ENCODE measurements at regions of chr18 and their contacts with region 1.

Region 1: GRCh38 chr18:3454365-3455089 is 4.6 kb downstream of the TGIF1 start:
- DNase-seq: peak in 4 of 5 donors; percentile 29 to 61 (median 52)
- H3K4me3 ChIP-seq: peak overlapping the region; percentile 81
- H3K4me3 Mint-ChIP-seq: peak overlapping the region; percentile 85 to 99 (median 97)
- H3K27ac ChIP-seq: peak overlapping the region; percentile 94
- H3K27ac Mint-ChIP-seq: peak overlapping the region; percentile 66 to 100 (median 96)
- H3K4me1 ChIP-seq: peaks cover 29% of the 10 kb centered on the region
- H3K4me1 Mint-ChIP-seq: peaks cover 63 to 76% (median 72%) of the 10 kb centered on the region in 3 donors
- H3K27me3 ChIP-seq: no peaks in the 10 kb centered on the region
- H3K27me3 Mint-ChIP-seq: peaks cover 0 to 7% of the 10 kb centered on the region in 2 donors

Region 2: DNA sequence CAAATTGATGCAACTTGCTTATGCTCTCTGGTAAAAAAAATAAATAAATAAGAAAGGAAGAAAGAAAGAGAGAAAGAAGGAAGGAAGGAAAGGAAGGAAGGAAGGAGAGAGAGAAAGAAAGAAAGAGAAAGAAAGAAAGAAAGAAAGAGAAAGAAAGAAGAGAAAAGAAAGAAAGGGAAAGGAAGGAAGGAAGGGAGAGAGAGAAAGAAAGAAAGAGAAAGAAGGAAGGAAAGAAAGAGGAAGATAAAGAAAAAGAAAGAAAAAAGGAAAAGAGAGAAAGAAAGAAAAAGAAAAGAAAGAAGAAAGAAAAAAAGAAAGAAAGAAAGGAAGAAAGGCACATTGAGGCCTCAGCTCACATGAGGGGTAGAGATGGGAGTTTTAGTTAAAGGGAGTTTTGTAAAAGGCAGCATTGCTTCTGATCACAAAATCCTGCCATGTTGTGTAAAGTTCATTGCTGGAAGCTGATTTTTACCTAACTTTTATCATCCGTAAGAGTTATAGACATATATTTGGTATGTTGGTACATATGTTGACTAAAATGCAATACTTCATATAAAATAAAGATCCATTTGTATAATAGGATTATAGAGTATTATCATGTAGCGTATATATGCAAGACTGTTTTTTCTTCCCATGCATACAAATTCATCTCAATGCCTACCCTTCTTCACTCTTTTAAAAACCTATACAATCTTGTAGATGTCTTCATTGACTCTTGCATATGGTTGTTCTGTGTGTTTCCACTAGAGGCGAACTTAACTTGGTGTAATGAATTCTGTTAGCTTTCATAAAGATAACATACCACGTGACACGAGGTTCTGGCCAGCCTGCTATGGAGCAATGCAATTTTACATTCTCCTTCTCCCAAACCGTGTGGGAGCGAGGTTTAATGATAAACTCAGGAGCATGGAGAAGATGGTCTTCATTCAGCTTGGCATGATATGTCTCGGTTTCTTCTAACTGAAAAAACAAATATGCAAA is 267.6 kb before region 1 on chr18:
- CTCF ChIA-PET with region 1: no interaction called
- POLR2A ChIA-PET with region 1: no interaction called
- DNase-seq: no peak
- H3K4me3 ChIP-seq: no peak overlapping the region
- H3K4me3 Mint-ChIP-seq: no peak overlapping the region
- H3K27ac ChIP-seq: no peak overlapping the region
- H3K27ac Mint-ChIP-seq: no peak overlapping the region
- H3K4me1 ChIP-seq: no peaks in the 10 kb centered on the region
- H3K4me1 Mint-ChIP-seq: no peaks in the 10 kb centered on the region
- H3K27me3 ChIP-seq: no peaks in the 10 kb centered on the region
- H3K27me3 Mint-ChIP-seq: no peaks in the 10 kb centered on the region

Region 3: DNA sequence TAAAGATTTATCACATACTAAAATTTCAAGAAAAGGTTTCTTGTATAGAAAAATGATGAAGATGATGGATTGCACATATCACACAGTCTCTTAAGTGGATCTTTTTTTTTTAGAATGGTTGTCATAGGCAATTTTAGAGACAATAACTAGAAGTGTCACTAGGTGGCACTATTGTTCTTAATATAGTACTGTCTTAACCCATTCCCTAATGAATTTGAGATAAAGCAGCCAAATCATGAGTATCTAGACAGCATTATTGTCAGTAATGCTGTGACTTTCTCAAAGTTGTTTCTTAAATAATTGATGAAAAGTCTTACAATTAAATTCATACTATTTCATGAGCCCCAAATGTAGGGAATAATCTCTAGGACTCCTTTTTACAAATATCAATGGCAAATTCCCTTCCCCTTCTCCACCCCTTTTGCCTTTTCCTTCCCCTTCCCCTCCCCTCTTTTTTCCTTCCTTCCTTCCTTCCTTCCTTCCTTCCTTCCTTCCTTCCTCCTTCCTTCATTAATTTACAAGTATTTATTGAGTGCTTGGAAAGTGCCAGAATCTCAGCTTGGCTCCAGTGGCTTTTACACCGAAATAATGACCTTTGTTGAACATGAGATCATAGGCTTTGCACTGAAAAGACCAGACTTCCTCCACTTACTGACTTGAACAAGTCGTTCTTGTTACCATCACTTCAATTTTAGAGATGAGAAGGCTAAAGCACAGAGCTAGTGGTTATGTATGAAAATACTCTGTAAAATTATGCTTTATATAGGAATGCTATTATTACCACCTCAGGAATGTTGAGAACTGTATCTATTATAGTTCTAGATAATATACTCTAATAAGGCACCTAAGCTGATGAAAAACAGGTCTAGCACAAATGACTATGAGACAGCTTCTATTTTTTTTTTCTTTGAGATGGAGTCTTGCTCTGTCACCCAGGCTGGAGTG is 172.8 kb before region 1 on chr18:
- CTCF ChIA-PET with region 1: interaction called, 10 read pairs
- POLR2A ChIA-PET with region 1: interaction called, 6 read pairs
- DNase-seq: peak in 2 of 5 donors; percentile 63 to 66
- H3K4me3 ChIP-seq: no peak overlapping the region
- H3K4me3 Mint-ChIP-seq: no peak overlapping the region
- H3K27ac ChIP-seq: no peak overlapping the region
- H3K27ac Mint-ChIP-seq: no peak overlapping the region
- H3K4me1 ChIP-seq: no peaks in the 10 kb centered on the region
- H3K4me1 Mint-ChIP-seq: peaks cover 0 to 5% (median 0%) of the 10 kb centered on the region in 3 donors
- H3K27me3 ChIP-seq: no peaks in the 10 kb centered on the region
- H3K27me3 Mint-ChIP-seq: no peaks in the 10 kb centered on the region

Region 4: GRCh38 chr18:3297025-3297984 is 157.2 kb before region 1 on chr18:
- CTCF ChIA-PET with region 1: interaction called, 22 read pairs
- POLR2A ChIA-PET with region 1: interaction called, 4 read pairs
- DNase-seq: peak; percentile 83 to 95 (median 86)
- H3K4me3 ChIP-seq: peak overlapping the region; percentile 92
- H3K4me3 Mint-ChIP-seq: peak overlapping the region; percentile 92 to 98 (median 95)
- H3K27ac ChIP-seq: peak overlapping the region; percentile 80
- H3K27ac Mint-ChIP-seq: peak overlapping the region; percentile 31 to 93 (median 86)
- H3K4me1 ChIP-seq: peaks cover 12% of the 10 kb centered on the region
- H3K4me1 Mint-ChIP-seq: peaks cover 8 to 12% (median 11%) of the 10 kb centered on the region in 3 donors
- H3K27me3 ChIP-seq: peaks cover 5% of the 10 kb centered on the region
- H3K27me3 Mint-ChIP-seq: peaks cover 8 to 34% of the 10 kb centered on the region in 2 donors

Region 5: DNA sequence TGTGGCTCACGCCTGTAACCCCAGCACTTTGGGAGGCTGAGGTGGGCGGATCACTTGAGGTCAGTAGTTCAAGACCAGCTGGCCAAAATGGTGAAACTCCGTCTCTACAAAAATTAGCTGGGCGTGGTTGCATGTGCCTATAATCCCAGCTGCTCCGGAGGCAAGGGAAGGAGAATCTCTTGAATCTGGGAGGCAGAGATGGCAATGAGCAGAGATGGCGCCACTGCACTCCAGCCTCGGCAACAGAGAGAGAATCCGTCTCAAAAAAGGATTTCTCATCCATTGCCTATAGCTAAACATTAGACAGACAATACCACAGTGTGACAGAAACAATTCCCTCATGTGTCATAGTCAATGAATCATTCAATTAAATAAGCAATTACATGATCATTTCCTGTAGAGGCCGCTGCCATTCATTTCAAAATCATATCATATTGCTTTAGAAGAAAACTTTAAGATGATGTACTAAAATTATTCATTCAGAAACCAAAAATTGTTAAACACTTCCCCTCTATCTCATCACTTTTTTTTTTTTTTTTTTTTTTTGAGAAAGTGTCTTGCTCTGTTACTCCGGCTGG is 74.1 kb before region 1 on chr18:
- CTCF ChIA-PET with region 1: interaction called, 13 read pairs
- POLR2A ChIA-PET with region 1: no interaction called
- DNase-seq: peak in 1 of 5 donors; percentile 24
- H3K4me3 ChIP-seq: no peak overlapping the region
- H3K4me3 Mint-ChIP-seq: no peak overlapping the region
- H3K27ac ChIP-seq: no peak overlapping the region
- H3K27ac Mint-ChIP-seq: peak overlapping the region in 1 of 8 donors; percentile 42
- H3K4me1 ChIP-seq: no peaks in the 10 kb centered on the region
- H3K4me1 Mint-ChIP-seq: no peaks in the 10 kb centered on the region
- H3K27me3 ChIP-seq: no peaks in the 10 kb centered on the region
- H3K27me3 Mint-ChIP-seq: peaks cover 8 to 21% of the 10 kb centered on the region in 2 donors

Region 6: DNA sequence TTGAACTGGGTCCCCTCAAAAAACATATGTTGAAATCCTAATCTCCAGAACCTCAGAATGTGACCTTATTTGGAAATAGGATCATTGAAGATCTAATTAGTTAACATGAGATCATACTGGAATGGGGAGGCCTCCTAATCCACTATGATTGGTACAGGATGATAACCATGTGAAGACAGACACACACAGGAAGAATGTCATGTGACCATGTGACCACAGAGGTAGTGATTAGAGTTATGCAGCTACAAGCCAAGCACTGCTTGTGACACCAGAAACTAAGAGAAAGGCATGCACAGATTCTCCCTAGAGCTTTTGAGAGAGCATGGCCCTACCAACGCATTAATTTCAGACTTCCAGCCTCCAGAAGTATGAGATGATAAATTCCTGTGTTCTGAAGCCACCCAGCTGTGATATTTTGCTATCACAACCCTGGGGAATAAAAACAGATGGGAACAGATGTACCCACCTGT is 51.5 kb before region 1 on chr18:
- CTCF ChIA-PET with region 1: no interaction called
- POLR2A ChIA-PET with region 1: no interaction called
- DNase-seq: no peak
- H3K4me3 ChIP-seq: no peak overlapping the region
- H3K4me3 Mint-ChIP-seq: no peak overlapping the region
- H3K27ac ChIP-seq: no peak overlapping the region
- H3K27ac Mint-ChIP-seq: no peak overlapping the region
- H3K4me1 ChIP-seq: no peaks in the 10 kb centered on the region
- H3K4me1 Mint-ChIP-seq: peaks cover 3 to 6% (median 6%) of the 10 kb centered on the region in 3 donors
- H3K27me3 ChIP-seq: no peaks in the 10 kb centered on the region
- H3K27me3 Mint-ChIP-seq: peaks cover 3 to 6% of the 10 kb centered on the region in 2 donors

Region 7: DNA sequence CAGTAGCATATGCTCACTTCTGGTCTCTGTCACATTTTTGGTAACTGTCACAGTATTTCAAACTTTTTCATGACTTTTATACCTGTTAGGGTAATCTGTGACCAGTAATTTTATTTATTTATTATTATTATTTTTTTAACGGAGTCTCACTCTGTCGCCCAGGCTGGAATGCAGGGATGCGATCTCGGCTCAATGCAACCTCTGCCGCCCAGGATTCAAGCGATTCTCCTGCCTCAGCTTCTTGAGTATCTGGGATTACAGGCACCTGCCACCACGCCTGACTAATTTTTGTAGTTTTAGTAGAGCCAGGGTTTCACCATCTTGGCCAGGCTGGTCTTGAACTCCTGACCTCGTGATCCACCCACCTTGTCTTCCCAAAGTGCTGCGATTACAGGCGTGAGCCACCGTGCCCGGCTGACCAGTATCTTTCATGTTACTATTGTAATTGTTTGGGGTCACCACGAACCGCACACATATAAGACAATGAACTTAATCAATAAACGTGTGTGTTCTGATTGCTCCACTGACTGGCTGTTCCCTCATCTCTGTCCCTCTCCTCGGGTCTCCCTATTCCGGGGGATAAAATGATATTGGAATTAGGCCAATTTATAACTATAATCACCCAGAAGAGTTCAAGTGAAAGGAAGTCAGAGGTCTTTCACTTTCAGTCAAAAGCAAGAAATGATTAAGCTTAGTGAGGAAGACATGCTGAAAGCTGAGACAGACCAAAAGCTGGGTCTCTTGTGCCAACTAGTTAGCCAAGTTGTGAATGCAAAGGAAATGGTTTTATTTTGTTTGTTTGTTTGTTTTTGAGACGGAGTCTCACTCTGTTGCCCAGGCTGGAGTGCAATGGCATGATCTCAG is 18.4 kb after region 1 on chr18:
- CTCF ChIA-PET with region 1: interaction called, 57 read pairs
- POLR2A ChIA-PET with region 1: interaction called, 7 read pairs
- DNase-seq: no peak
- H3K4me3 ChIP-seq: no peak overlapping the region
- H3K4me3 Mint-ChIP-seq: peak overlapping the region in 6 of 7 donors; percentile 30 to 80 (median 67)
- H3K27ac ChIP-seq: no peak overlapping the region
- H3K27ac Mint-ChIP-seq: peak overlapping the region in 6 of 8 donors; percentile 16 to 82 (median 54)
- H3K4me1 ChIP-seq: no peaks in the 10 kb centered on the region
- H3K4me1 Mint-ChIP-seq: peaks cover 7 to 14% (median 12%) of the 10 kb centered on the region in 3 donors
- H3K27me3 ChIP-seq: no peaks in the 10 kb centered on the region
- H3K27me3 Mint-ChIP-seq: no peaks in the 10 kb centered on the region

Region 8: GRCh38 chr18:3585656-3586509 is 131.4 kb after region 1 on chr18:
- CTCF ChIA-PET with region 1: interaction called, 100 read pairs
- POLR2A ChIA-PET with region 1: interaction called, 5 read pairs
- DNase-seq: peak; percentile 40 to 78 (median 59)
- H3K4me3 ChIP-seq: no peak overlapping the region
- H3K4me3 Mint-ChIP-seq: peak overlapping the region in 3 of 7 donors; percentile 20 to 53 (median 21)
- H3K27ac ChIP-seq: peak overlapping the region; percentile 27
- H3K27ac Mint-ChIP-seq: peak overlapping the region in 6 of 8 donors; percentile 1 to 53 (median 43)
- H3K4me1 ChIP-seq: no peaks in the 10 kb centered on the region
- H3K4me1 Mint-ChIP-seq: peaks cover 9 to 14% (median 13%) of the 10 kb centered on the region in 3 donors
- H3K27me3 ChIP-seq: no peaks in the 10 kb centered on the region
- H3K27me3 Mint-ChIP-seq: peaks cover 0 to 1% of the 10 kb centered on the region in 2 donors

Region 9: DNA sequence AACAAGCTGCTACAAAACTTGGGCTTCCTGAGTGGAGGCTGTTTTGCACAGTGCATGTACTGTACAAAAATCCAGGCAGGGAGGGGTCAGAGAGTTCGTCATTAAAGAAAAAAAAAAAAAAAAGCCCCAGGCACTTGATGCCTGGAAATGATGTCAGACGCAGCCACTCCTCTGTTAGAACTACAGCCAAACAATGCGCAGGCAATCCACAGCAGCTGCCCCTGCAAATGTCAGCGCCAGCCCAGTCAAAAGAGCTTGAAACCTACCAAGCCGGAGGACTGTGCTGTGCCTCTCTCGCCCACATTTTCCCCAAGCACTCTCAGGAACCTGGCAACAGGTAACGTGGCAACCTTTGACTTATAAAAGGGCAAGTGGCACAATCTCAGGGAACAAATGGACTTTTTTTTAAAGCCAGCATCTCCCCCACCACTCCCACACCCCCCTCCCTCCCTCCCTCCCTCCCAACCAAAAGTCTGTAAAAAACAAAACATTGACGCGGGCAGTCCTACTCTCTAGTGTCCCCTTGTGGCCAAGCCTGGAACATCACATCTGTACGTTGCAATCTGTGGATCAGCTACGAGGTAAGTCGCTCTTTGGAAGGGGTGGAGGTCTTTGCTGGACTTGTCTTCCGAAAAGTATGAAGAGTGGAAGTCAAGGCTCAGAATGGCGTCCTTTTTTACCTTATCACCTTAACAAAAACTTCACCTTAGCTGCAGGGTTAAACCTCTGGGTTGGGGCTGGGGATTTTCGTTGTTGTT is 139.6 kb after region 1 on chr18:
- CTCF ChIA-PET with region 1: interaction called, 100 read pairs
- POLR2A ChIA-PET with region 1: interaction called, 27 read pairs
- DNase-seq: peak; percentile 77 to 95 (median 93)
- H3K4me3 ChIP-seq: peak overlapping the region; percentile 74
- H3K4me3 Mint-ChIP-seq: peak overlapping the region; percentile 94 to 98 (median 95)
- H3K27ac ChIP-seq: peak overlapping the region; percentile 95
- H3K27ac Mint-ChIP-seq: peak overlapping the region; percentile 97 to 100 (median 99)
- H3K4me1 ChIP-seq: peaks cover 41% of the 10 kb centered on the region
- H3K4me1 Mint-ChIP-seq: peaks cover 49 to 64% (median 54%) of the 10 kb centered on the region in 3 donors
- H3K27me3 ChIP-seq: no peaks in the 10 kb centered on the region
- H3K27me3 Mint-ChIP-seq: no peaks in the 10 kb centered on the region

Region 10: GRCh38 chr18:4211111-4211837 is 756.7 kb after region 1 on chr18:
- CTCF ChIA-PET with region 1: no interaction called
- POLR2A ChIA-PET with region 1: no interaction called
- DNase-seq: no peak
- H3K4me3 ChIP-seq: no peak overlapping the region
- H3K4me3 Mint-ChIP-seq: no peak overlapping the region
- H3K27ac ChIP-seq: no peak overlapping the region
- H3K27ac Mint-ChIP-seq: no peak overlapping the region
- H3K4me1 ChIP-seq: no peaks in the 10 kb centered on the region
- H3K4me1 Mint-ChIP-seq: no peaks in the 10 kb centered on the region
- H3K27me3 ChIP-seq: no peaks in the 10 kb centered on the region
- H3K27me3 Mint-ChIP-seq: peaks cover 0 to 1% of the 10 kb centered on the region in 2 donors

Measured in CD8-positive, alpha-beta memory T cell (primary cell).